HepG2 (cell line): ENCODE measurements at regions of chr18 and their contacts with region 1.

Region 1: GRCh38 chr18:45690975-45691815 is 32.8 kb upstream of the SLC14A1 start:
- DNase-seq: peak; percentile 46
- ATAC-seq: peak; percentile 97
- H3K4me3 ChIP-seq: no peak overlapping the region
- H3K27ac ChIP-seq: no peak overlapping the region
- H3K4me1 ChIP-seq: no peaks in the 10 kb centered on the region
- H3K27me3 ChIP-seq: no peaks in the 10 kb centered on the region; a peak in 2 of 5 replicates
- CTCF ChIP-seq: peak; percentile 92
- EP300 ChIP-seq: no peak
- POLR2A ChIP-seq: no peak
- RAD21 ChIP-seq: peak; percentile 68

Region 2: DNA sequence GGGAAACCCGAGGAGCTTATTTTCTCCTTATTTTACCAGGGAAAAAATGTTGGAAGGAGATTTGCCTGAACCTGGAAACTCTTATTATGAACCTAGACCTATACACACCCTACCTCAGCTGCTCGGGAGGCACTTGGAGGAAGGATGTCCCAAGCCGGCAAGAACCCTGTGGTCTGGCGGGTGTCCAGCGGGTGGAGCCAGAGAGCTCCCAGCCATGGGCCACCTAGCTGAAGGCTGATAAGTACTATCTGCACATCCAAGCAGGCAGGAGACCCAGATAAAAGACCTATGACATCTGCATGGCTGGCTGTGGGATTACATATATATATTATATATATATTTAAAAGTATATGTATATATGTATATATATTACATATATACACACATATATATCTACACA is 31.7 kb after region 1 on chr18:
- CTCF ChIA-PET with region 1: no interaction called
- POLR2A ChIA-PET with region 1: no interaction called
- in situ Hi-C with region 1: no loop called
- intact Hi-C with region 1: no loop called
- DNase-seq: peak; percentile 21
- ATAC-seq: peak; percentile 98
- H3K4me3 ChIP-seq: no peak overlapping the region
- H3K27ac ChIP-seq: no peak overlapping the region
- H3K4me1 ChIP-seq: no peaks in the 10 kb centered on the region
- H3K27me3 ChIP-seq: no peaks in the 10 kb centered on the region; a peak in 1 of 5 replicates
- CTCF ChIP-seq: peak; percentile 83
- EP300 ChIP-seq: no peak
- POLR2A ChIP-seq: no peak
- RAD21 ChIP-seq: peak; percentile 51; the same call in 1 of the 2 replicates

Region 3: DNA sequence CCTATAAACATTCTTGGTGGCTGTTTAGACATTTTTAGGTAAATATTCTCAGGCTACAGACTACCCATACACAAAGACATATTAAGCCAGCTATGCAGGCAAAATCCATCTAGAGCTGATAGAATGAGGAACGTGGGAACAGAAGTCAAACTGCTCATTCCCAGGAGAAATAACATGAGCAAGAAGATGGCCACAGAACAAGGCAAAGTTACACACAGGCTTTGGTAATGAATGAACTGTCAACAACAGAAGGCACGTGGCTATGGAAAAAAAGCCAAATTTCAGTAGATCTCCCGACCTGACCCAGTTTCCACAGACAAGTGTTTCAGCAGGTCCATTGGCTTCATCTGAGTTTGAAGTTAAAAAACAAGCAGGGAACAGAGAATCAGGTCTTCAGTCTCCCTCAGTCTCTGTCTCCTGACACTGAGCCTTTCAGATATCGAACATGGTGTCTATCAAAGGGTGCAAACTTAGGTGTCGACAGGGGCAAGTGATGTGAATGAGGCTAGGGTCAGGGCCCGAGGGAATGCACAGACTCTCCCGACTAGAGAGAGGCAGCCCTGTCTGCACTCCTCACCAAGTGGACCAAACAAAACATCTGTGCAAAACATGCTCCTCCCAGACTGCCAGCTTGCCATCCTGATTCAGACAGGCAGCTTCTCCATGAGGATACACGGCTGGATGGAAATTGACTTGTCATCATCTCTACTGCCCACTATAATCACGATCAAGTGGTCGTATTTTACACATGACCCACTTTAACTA is 160.1 kb after region 1 on chr18:
- CTCF ChIA-PET with region 1: interaction called, 3 read pairs
- POLR2A ChIA-PET with region 1: no interaction called
- in situ Hi-C with region 1: no loop called
- intact Hi-C with region 1: loop called (anchors 1 kb)
- DNase-seq: no peak
- ATAC-seq: no peak
- H3K4me3 ChIP-seq: no peak overlapping the region
- H3K27ac ChIP-seq: no peak overlapping the region
- H3K4me1 ChIP-seq: no peaks in the 10 kb centered on the region
- H3K27me3 ChIP-seq: no peaks in the 10 kb centered on the region
- CTCF ChIP-seq: no peak
- EP300 ChIP-seq: no peak
- POLR2A ChIP-seq: no peak
- RAD21 ChIP-seq: no peak

Region 4: GRCh38 chr18:45910405-45911023 is 219.3 kb after region 1 on chr18:
- CTCF ChIA-PET with region 1: interaction called, 7 read pairs
- POLR2A ChIA-PET with region 1: no interaction called
- in situ Hi-C with region 1: no loop called
- intact Hi-C with region 1: loop called (anchors 1 kb)
- DNase-seq: peak; percentile 44
- ATAC-seq: peak; percentile 94
- H3K4me3 ChIP-seq: no peak overlapping the region
- H3K27ac ChIP-seq: no peak overlapping the region
- H3K4me1 ChIP-seq: no peaks in the 10 kb centered on the region
- H3K27me3 ChIP-seq: no peaks in the 10 kb centered on the region
- CTCF ChIP-seq: peak; percentile 84
- EP300 ChIP-seq: no peak
- POLR2A ChIP-seq: no peak
- RAD21 ChIP-seq: peak; percentile 49; the same call in 1 of the 2 replicates

Region 5: GRCh38 chr18:45967007-45967706 is 276.0 kb after region 1 on chr18 and contains the start of gene EPG5:
- CTCF ChIA-PET with region 1: no interaction called
- POLR2A ChIA-PET with region 1: no interaction called
- in situ Hi-C with region 1: no loop called
- intact Hi-C with region 1: loop called (anchors 5 kb)
- DNase-seq: peak; percentile 93
- ATAC-seq: peak; percentile 99
- H3K4me3 ChIP-seq: peak within 1 kb of the TSS; percentile 96 to 100 (median 97)
- H3K27ac ChIP-seq: peak within 1 kb of the TSS; percentile 73
- H3K4me1 ChIP-seq: peaks cover 29% of the 10 kb centered on the region
- H3K27me3 ChIP-seq: no peaks in the 10 kb centered on the region; a peak in 1 of 5 replicates
- CTCF ChIP-seq: no peak
- EP300 ChIP-seq: no peak
- POLR2A ChIP-seq: peak; percentile 68 to 74
- RAD21 ChIP-seq: no peak
- total RNA-seq, gene EPG5: 6.7 and 13.3 TPM in 2 replicates